ENCODE measurements at regions of chr1 and their contacts with region 1.

Region 1: GRCh38 chr1:89843281-89844121 is 22.7 kb downstream of the LRRC8D start:
- DNase-seq: peak; percentile 92
- ATAC-seq: peak; percentile 79
- H3K4me3 Mint-ChIP-seq: peak overlapping the region; percentile 94
- H3K27ac Mint-ChIP-seq: peak overlapping the region; percentile 97
- H3K4me1 Mint-ChIP-seq: peaks cover 59% of the 10 kb centered on the region
- H3K27me3 Mint-ChIP-seq: no peaks in the 10 kb centered on the region

Region 2: GRCh38 chr1:89681045-89681729 is 162.3 kb before region 1 on chr1:
- CTCF ChIA-PET with region 1: no interaction called
- POLR2A ChIA-PET with region 1: no interaction called
- intact Hi-C with region 1: no loop called
- DNase-seq: no peak
- ATAC-seq: no peak
- H3K4me3 Mint-ChIP-seq: no peak overlapping the region
- H3K27ac Mint-ChIP-seq: peak overlapping the region; percentile 60
- H3K4me1 Mint-ChIP-seq: peaks cover 51% of the 10 kb centered on the region
- H3K27me3 Mint-ChIP-seq: no peaks in the 10 kb centered on the region

Region 3: DNA sequence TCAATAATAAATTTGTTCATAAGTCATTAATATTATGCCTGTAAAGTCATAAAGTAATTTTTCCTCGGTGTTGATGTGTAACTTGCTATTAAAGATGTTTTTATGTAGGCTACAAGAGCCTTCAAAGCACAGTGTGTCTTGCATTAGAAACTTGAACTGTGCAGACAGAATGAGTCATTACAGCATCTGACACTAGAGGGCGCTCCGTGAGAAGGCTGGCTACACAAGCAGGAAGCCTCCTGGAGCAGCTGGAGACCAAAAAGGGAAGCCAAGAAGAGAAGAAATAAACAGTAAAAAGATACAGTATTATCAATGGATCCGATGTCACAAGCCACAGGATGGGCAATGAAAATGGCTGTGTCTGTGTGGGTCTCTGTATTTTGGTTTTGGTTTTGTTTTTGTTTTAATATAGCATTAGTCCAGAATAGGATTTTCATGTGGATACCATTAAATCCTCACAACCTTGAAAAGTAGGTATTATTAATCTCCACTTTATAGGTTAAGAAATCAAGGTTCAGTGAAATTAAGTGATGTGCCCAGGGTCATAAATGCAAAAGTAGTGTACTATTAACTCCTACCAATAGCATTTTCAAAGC is 38.8 kb before region 1 on chr1:
- CTCF ChIA-PET with region 1: interaction called, 6 read pairs
- POLR2A ChIA-PET with region 1: no interaction called
- intact Hi-C with region 1: loop called (anchors 2 kb)
- DNase-seq: peak; percentile 93
- ATAC-seq: peak; percentile 90
- H3K4me3 Mint-ChIP-seq: no peak overlapping the region
- H3K27ac Mint-ChIP-seq: no peak overlapping the region
- H3K4me1 Mint-ChIP-seq: peaks cover 5% of the 10 kb centered on the region
- H3K27me3 Mint-ChIP-seq: peaks cover 3% of the 10 kb centered on the region

Region 4: DNA sequence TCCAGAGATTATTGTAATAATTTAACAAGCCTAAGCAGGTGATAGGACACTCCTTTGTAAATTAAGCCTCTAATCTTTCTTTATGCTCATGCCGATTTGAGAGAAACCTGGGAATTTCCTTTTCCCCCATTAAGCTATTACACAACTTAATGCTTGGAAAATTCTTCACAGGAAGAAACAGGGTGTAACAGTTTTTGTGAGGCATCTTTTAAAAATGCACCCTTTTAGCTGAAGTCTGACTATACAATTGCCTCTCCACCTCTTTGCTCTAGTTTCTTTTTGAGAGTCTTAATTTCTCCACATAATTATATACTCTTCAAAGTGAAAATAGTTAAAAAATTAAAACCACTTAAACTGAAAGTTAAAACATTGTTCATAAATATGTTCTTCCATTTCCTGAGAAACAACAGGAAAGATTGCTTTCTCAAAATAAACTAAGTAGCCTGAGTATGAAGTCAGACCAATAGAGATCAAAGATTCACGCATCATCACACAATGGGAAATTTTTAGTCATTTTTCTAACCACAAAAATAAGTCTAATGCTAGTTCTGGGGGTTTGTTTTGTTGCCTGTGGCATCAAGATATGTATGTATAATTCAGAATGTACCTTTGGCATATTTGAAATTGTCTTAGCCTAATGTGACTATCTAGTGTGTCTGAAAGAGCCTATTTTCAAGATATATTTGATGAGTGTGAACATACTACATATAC is 12.1 kb after region 1 on chr1:
- CTCF ChIA-PET with region 1: interaction called, 16 read pairs
- POLR2A ChIA-PET with region 1: interaction called, 9 read pairs
- intact Hi-C with region 1: loop called (anchors 1 kb)
- DNase-seq: no peak
- ATAC-seq: peak; percentile 72
- H3K4me3 Mint-ChIP-seq: no peak overlapping the region
- H3K27ac Mint-ChIP-seq: no peak overlapping the region
- H3K4me1 Mint-ChIP-seq: peaks cover 21% of the 10 kb centered on the region
- H3K27me3 Mint-ChIP-seq: no peaks in the 10 kb centered on the region

Region 5: GRCh38 chr1:89930579-89930978 is 87.1 kb after region 1 on chr1:
- CTCF ChIA-PET with region 1: no interaction called
- POLR2A ChIA-PET with region 1: interaction called, 11 read pairs
- intact Hi-C with region 1: no loop called
- DNase-seq: no peak
- ATAC-seq: no peak
- H3K4me3 Mint-ChIP-seq: no peak overlapping the region
- H3K27ac Mint-ChIP-seq: no peak overlapping the region
- H3K4me1 Mint-ChIP-seq: peaks cover 21% of the 10 kb centered on the region
- H3K27me3 Mint-ChIP-seq: no peaks in the 10 kb centered on the region

Region 6: DNA sequence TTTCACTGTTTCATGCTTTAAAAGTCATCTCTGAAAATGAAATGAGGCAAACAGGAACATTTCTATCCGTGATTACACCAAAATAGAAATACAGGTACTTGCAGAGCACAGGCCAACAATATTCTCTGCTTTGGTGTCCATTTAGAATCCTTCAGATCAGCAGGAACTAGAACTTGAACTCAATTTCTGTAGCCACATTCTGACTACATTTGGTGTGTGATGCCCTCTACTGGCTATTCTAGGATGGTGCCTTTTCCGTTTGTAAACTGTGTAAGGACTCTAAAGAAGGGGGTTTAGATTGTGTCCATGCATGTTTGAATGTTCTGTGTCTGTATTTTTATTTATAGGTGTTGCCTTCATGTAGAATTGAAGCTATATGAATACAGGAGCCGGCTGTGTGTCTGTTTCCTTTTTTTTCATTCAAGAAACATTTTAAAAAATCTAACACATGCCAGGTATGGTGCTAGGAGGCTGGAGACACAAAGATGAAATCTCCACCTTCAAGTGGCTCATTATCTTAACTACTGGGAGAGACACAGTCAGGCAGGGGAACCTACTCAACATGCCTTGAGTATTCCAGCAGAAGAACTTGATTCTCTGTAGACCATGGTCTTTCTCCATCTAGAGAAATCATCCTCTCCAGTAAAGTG is 143.8 kb after region 1 on chr1:
- CTCF ChIA-PET with region 1: interaction called, 7 read pairs
- POLR2A ChIA-PET with region 1: no interaction called
- intact Hi-C with region 1: loop called (anchors 1 to 2 kb)
- DNase-seq: peak; percentile 54
- ATAC-seq: peak; percentile 90
- H3K4me3 Mint-ChIP-seq: no peak overlapping the region
- H3K27ac Mint-ChIP-seq: no peak overlapping the region
- H3K4me1 Mint-ChIP-seq: peaks cover 11% of the 10 kb centered on the region
- H3K27me3 Mint-ChIP-seq: peaks cover 2% of the 10 kb centered on the region